Posterior vena cava (tissue), 2 donors: ENCODE measurements at regions of chr5 and their contacts with region 1.

Region 1: GRCh38 chr5:88438011-88438410 is 169.4 kb upstream of the TMEM161B start:
- DNase-seq: no peak

Region 2: DNA sequence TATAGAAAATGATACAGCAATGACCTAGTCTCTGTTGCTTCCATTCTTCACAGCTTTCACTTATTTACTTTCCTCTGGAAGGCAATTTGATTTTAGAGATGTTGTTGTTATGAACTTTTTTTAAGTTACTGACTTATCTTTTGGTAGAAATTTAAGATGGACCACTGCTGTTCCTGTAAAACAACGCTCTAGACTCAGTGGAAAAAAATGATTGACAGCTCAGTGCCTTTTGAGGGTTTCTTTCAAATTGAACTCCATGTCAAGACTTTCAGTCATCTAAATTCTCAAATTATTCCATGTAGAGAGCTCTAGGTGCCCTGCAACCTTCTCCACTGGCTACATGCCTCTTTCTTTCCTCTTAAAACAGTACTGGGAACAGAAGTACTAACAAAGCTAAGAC is 432.6 kb before region 1 on chr5:
- intact Hi-C with region 1: no loop called
- DNase-seq: no peak

Region 3: DNA sequence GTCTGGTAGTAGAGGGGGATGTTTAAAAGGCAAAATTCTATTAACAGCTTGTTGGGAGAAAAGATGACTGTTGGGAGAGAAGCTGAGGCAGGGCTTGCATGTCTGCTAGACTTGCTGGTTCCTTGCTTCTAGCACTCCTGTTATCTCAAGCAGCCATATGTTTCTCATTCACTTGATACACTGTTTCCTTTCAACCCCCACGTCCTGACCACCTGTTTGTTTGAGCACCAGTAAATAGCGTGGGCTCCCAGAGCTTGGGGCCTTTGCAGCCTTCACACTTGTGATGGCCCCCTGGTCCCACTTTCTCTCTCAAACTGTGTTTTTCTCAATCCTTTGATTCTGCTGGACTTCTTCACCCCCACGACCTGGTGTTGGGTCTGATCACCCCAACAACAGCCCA is 57.7 kb before region 1 on chr5:
- intact Hi-C with region 1: no loop called
- DNase-seq: no peak

Region 4: DNA sequence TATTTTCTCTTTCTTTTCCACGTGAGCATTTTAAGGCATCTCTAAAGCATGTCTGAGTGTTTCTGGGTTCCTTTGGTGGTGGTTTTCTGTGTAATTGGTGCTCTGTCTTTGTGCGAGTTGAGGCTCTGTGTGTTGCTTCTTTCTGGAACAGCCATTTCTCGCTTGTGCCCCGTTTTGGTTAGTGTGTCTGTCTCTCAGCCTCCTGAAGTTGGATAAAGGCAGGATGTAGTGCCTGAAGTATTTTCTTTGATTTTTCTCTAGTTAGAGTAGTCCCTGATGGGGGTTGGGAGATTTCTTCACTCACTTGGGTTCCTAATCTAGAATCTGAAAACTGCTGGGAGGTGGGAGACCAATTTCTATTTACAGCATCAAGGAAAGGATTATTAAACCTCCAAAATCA is 39.7 kb before region 1 on chr5:
- intact Hi-C with region 1: no loop called
- DNase-seq: no peak

Region 5: GRCh38 chr5:88459971-88460370 is 22.0 kb after region 1 on chr5:
- intact Hi-C with region 1: loop called in 1 of 2 experiments (anchors 1 kb)
- DNase-seq: no peak

Region 6: DNA sequence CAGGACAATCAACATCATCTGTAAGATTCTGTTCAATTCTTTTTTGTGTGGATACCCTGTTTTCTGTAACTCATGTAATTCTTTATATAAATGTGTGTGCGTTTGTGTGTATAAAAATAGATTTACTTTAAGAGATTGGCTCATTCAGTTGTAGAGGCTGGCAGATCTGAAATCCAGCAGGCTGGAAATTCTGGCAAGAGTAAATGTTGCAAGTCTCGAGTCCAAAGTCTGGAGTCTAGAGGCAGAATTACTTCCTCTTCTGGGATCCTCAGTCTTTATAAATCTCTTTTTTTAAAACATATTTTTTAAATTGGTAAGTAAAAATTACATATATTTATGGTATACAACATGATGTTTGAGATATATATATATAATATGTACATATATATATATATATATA is 32.7 kb after region 1 on chr5:
- intact Hi-C with region 1: no loop called
- DNase-seq: no peak